A673 (cell line): ENCODE measurements at regions of chr5 and their contacts with region 1.

Region 1: DNA sequence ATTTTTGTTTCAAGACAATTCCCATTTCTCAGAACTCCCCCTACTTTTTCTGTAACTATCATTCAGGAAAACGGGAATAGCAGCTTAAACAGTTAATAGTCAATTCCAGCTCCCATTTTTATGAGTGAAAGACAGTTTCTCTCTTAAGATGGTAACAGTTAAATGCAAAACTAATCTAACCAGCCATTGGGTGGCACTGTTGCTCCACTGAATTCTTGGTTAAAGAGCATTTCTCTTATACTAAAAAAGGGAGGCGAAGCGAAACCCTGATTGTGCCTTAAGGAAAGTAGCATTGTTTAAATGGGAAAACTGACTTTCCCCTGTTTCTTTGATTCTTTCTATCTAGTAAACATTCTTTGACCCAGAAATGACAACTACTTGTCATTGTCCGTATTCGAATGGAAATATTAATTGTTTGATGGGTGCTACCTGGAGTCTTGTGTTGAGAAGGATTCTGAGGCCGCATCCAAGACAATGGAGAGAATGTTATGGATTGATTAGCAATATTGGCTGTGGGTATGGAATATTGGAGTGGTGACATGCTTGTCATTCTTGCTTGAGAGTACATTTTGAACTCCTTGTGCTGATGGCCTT is 507.8 kb downstream of the MAT2B start:
- DNase-seq: peak; percentile 71
- H3K4me3 ChIP-seq: no peak overlapping the region
- H3K27ac ChIP-seq: no peak overlapping the region
- H3K4me1 ChIP-seq: no peaks in the 10 kb centered on the region
- H3K27me3 ChIP-seq: peaks cover 15% of the 10 kb centered on the region
- CTCF ChIP-seq: peak; percentile 63

Region 2: DNA sequence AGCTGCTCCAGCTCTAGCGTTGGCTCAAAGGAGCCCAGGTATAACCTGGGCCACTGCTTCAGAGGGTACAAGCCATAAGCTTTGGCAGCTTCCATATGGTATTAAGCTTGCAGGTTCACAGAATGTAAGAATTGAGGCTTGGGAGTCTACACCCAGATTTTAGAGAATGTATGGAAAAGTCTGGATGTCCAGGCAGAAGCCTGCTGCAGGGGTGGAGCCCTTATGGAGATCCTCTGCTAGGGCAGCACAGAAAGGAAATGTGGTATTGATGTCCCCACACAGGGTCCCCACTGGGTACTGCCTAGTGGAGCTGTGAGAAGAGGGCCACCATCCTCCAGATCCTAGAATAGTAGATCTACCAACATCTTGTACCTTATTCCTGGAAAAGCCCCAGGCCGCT is 119.2 kb after region 1 on chr5:
- CTCF ChIA-PET with region 1: no interaction called
- POLR2A ChIA-PET with region 1: no interaction called
- intact Hi-C with region 1: no loop called
- DNase-seq: no peak
- H3K4me3 ChIP-seq: no peak overlapping the region
- H3K27ac ChIP-seq: no peak overlapping the region
- H3K4me1 ChIP-seq: no peaks in the 10 kb centered on the region
- H3K27me3 ChIP-seq: no peaks in the 10 kb centered on the region
- CTCF ChIP-seq: no peak

Region 3: GRCh38 chr5:164475339-164475977 is 462.3 kb after region 1 on chr5:
- CTCF ChIA-PET with region 1: no interaction called
- POLR2A ChIA-PET with region 1: no interaction called
- intact Hi-C with region 1: loop called (anchors 10 kb)
- DNase-seq: peak; percentile 3
- H3K4me3 ChIP-seq: no peak overlapping the region
- H3K27ac ChIP-seq: no peak overlapping the region
- H3K4me1 ChIP-seq: no peaks in the 10 kb centered on the region
- H3K27me3 ChIP-seq: peaks cover 4% of the 10 kb centered on the region
- CTCF ChIP-seq: peak; percentile 42

Region 4: GRCh38 chr5:164504141-164504772 is 491.1 kb after region 1 on chr5:
- CTCF ChIA-PET with region 1: no interaction called
- POLR2A ChIA-PET with region 1: no interaction called
- intact Hi-C with region 1: loop called (anchors 1 kb)
- DNase-seq: peak; percentile 44
- H3K4me3 ChIP-seq: no peak overlapping the region
- H3K27ac ChIP-seq: no peak overlapping the region
- H3K4me1 ChIP-seq: no peaks in the 10 kb centered on the region
- H3K27me3 ChIP-seq: peaks cover 15% of the 10 kb centered on the region
- CTCF ChIP-seq: peak; percentile 75

Region 5: GRCh38 chr5:165209086-165209727 is 1196.0 kb after region 1 on chr5:
- CTCF ChIA-PET with region 1: no interaction called
- POLR2A ChIA-PET with region 1: no interaction called
- intact Hi-C with region 1: loop called (anchors 5 kb)
- DNase-seq: peak; percentile 33
- H3K4me3 ChIP-seq: no peak overlapping the region
- H3K27ac ChIP-seq: no peak overlapping the region
- H3K4me1 ChIP-seq: no peaks in the 10 kb centered on the region
- H3K27me3 ChIP-seq: no peaks in the 10 kb centered on the region
- CTCF ChIP-seq: peak; percentile 68